ENCODE measurements at regions of chr1 and their contacts with region 1.

Region 1: DNA sequence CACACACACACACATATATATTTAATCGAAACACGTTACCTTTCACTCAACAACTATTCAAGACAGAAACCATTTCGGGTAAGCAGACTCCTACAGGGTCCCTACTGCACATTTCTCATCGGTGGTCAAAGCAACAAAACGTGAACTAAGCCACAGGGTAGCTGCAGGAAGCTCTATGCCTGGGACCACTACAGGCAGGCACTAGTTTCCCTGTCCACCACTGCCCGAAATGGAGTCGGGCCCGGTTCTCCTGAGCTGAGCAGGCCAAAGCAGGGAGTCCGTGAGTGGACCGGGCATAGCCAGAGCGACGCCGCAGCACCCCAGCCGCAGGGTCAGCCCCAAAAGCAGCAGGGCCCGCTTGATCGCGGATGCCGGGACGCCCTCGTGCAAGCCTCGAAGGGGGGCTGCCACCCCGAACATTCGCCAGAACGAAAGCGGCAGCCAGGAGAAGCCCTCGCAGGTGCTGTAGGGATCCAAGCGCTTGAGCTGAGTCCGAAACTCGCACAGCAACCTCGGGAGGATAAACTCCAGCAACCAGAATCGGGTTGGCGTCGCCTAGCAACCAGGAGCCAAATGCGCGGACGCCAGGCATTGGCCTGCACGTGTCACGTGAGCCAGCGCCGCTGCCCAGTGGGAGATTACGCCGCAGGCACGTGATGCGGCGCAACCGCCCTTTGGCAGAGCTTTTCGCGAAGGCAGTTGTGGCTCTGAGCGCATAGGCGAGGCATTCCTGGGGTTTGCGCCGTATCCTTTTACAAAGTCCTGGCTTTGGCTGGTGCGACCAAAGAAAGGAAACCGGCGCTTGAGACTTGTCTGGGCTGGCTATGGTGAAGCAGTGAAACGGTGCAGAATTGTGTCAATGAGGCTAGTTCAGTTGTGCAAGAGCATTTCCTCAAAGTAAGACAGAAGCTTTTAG is 13.9 kb upstream of the DDI2 start:
- DNase-seq: peak; percentile 46
- H3K4me3 ChIP-seq: peak overlapping the region; percentile 77
- CTCF ChIP-seq: no peak

Region 2: DNA sequence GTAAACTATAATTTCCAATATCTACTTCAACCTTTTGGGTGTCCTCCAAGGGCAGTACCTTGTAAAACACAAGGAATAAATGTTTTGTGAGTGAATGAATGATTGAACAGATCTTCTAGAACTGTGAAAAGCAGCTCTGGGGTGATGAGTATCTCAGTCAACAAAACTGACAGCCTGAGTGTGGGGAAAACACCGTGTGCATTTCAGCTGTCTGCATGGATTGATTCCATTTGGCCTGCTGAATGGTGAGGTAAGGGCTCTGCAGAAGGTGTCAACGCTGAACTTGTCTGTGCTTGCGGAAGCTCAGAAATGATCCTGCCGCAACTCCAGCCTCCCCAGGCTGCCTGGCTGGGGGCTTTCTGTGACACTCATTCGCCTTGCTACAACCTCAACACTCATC is 11.0 kb before region 1 on chr1:
- CTCF ChIA-PET with region 1: interaction called, 34 read pairs
- POLR2A ChIA-PET with region 1: interaction called, 4 read pairs
- DNase-seq: no peak
- H3K4me3 ChIP-seq: no peak overlapping the region
- CTCF ChIP-seq: no peak

Measured in AG04449 (cell line).